ENCODE measurements at regions of chr6 and their contacts with region 1.

Region 1: GRCh38 chr6:158072083-158072721 is 90.5 kb downstream of the SYNJ2 start:
- DNase-seq: peak; percentile 82
- ATAC-seq: peak; percentile 83
- H3K4me3 ChIP-seq: no peak overlapping the region
- H3K27ac ChIP-seq: no peak overlapping the region
- H3K4me1 ChIP-seq: no peaks in the 10 kb centered on the region
- H3K27me3 ChIP-seq: no peaks in the 10 kb centered on the region
- CTCF ChIP-seq: peak; percentile 89

Region 2: GRCh38 chr6:157779705-157780604 is 292.2 kb before region 1 on chr6:
- intact Hi-C with region 1: no loop called
- DNase-seq: no peak
- ATAC-seq: no peak
- H3K4me3 ChIP-seq: no peak overlapping the region
- H3K27ac ChIP-seq: no peak overlapping the region
- H3K4me1 ChIP-seq: no peaks in the 10 kb centered on the region
- H3K27me3 ChIP-seq: no peaks in the 10 kb centered on the region
- CTCF ChIP-seq: no peak

Region 3: DNA sequence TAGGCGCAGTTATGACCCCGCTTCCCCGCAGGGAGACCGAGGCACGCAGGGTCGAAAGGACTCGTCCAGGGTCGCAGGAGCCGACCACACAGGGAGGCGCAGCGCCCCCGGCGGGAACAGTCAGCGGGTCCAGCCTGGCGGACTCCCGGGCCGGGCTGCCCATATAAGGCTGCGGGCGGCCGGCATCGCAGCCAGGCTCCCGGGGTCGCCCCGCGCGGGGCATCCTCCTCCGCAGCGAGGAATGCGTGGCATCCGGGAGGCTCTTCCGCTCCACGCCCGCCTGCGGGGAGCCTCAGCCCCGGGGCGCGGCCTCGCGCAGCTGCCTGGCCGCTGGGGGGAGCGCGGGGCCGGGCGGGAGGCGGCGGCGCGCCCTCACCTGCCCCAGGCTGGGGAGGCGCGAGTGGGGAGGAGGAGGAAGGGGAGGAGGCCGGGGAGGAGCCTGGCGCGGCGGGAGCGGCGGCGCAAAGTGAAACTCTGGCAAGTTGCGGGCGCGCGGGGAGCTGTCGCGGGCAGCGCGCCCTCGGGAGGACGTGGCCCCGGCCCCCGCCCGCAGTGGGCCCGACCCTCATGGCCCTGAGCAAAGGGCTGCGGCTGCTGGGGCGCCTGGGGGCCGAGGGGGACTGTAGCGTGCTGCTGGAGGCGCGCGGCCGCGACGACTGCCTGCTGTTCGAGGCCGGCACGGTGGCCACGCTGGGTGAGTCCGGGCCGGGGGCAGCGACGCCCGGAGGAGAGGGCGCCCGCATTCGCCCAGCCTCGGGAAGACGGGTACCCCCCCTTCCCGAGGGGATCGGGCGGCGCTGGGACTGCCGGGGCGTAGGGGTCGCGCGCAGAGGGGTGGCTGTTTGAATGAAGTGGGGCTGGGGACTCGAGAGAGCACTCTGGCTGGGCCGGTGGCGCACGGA is 90.6 kb before region 1 on chr6 and contains the start of gene SYNJ2:
- intact Hi-C with region 1: loop called (anchors 10 kb)
- DNase-seq: peak; percentile 87
- ATAC-seq: peak; percentile 92
- H3K4me3 ChIP-seq: peak within 1 kb of the TSS; percentile 83
- H3K27ac ChIP-seq: peak within 1 kb of the TSS; percentile 63
- H3K4me1 ChIP-seq: peaks cover 9% of the 10 kb centered on the region
- H3K27me3 ChIP-seq: no peaks in the 10 kb centered on the region
- CTCF ChIP-seq: peak; percentile 49
- total RNA-seq, gene SYNJ2: 7.2 TPM

Measured in upper lobe of right lung (tissue), 1 donor.